Dendritic cell treated with granulocyte-macrophage colony-stimulating factor and Interleukin-4, amounts not matched to agents 40 ng/mL and 50 ng/mL, for 4 days (primary cell): ENCODE measurements at regions of chr2 and their contacts with region 1.

Region 1: GRCh38 chr2:25197336-25198208 is 29.2 kb upstream of the POMC start:
- H3K4me3 Mint-ChIP-seq: no peak overlapping the region
- H3K27ac Mint-ChIP-seq: no peak overlapping the region
- H3K4me1 Mint-ChIP-seq: peaks cover 9% of the 10 kb centered on the region
- H3K27me3 Mint-ChIP-seq: peaks cover 18% of the 10 kb centered on the region

Region 2: GRCh38 chr2:25131567-25132298 is 65.8 kb before region 1 on chr2:
- intact Hi-C with region 1: loop called (anchors 10 kb)
- H3K4me3 Mint-ChIP-seq: peak overlapping the region; percentile 65
- H3K27ac Mint-ChIP-seq: no peak overlapping the region
- H3K4me1 Mint-ChIP-seq: peaks cover 26% of the 10 kb centered on the region
- H3K27me3 Mint-ChIP-seq: peaks cover 70% of the 10 kb centered on the region

Region 3: DNA sequence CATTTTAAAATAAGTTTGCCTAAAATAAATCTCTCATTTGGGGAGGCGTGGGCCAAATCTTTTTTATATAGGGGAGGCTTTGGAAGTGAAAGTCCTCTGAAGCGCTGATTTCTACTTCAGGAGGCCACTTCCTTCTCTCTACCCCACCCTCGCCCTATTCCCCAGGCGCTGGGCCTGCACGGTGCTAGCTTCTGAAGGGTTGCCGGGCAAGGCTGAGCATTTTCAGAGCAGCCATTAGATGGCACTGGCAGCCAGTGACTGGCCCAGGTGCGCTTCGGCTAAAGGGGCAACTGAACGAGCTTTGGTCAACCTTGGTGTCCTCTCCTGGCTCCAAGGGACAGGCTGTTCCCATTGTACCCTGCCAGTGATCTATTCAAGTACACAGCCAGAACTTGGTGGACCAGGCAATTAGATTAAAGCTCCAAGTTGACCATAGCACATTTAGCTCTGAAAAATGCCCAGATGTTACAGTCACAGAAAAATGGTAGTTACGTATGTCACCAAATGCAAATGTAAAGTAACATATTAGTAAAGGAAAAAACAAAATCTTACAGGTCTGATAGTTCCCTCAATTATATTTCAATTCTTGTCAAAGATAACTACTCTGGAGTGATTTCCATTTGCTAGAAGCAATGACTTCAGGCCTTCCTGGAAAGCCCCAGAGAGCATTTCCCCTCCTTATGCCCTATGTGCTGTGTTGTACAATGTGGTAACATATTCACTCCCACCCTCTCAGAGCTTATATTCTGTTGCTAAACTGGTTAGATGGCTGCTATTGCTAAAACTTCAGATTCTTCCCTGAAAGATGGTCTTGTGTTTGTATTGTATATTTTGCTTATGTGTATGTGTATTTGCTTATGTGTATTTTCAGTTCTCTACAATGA is 31.3 kb before region 1 on chr2:
- intact Hi-C with region 1: loop called (anchors 2 kb)
- H3K4me3 Mint-ChIP-seq: no peak overlapping the region
- H3K27ac Mint-ChIP-seq: no peak overlapping the region
- H3K4me1 Mint-ChIP-seq: peaks cover 15% of the 10 kb centered on the region
- H3K27me3 Mint-ChIP-seq: peaks cover 87% of the 10 kb centered on the region